ENCODE measurements at regions of chr16 and their contacts with region 1.

Region 1: GRCh38 chr16:81808933-81809496 is 29.9 kb downstream of the PLCG2 start:
- DNase-seq: peak; percentile 2
- ATAC-seq: peak; percentile 35; the same call in 1 of the 2 replicates
- H3K4me3 ChIP-seq: no peak overlapping the region
- H3K27ac ChIP-seq: no peak overlapping the region
- H3K4me1 ChIP-seq: no peaks in the 10 kb centered on the region
- H3K27me3 ChIP-seq: no peaks in the 10 kb centered on the region
- CTCF ChIP-seq: no peak

Region 2: DNA sequence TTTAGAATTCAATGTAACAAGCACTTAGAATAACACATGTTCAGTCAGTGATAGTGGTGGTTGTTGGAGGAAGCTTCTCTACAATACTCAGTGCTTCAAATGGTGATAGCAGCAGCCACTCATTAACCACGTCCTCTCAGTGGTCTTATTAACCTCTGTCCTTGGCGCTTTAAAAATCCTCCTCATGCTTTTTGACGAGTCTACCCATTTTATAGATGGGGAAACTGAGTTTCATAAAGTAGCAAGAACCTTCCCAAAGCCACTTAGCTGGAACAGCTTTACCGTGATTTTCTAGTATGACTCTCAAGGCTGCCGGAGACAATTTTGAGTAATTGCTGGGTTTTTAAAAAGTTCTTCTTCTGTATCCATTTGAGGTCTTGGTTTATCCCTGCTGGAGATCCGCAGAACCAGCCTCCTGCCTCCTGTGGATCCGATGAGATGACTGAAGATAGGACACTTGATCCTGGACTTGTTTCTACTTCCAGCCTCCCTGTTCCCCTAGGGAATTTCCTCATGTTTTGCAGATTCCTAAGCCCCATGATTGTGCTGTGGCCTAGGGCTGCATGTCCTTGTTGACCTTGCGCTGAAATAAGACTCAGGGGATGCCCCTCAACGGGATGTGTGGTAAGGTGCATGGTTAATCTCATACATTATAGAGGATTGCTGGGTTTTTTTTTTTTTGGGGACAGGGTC is 17.7 kb after region 1 on chr16:
- CTCF ChIA-PET with region 1: no interaction called
- POLR2A ChIA-PET with region 1: interaction called, 10 read pairs
- intact Hi-C with region 1: no loop called
- DNase-seq: no peak
- ATAC-seq: no peak
- H3K4me3 ChIP-seq: no peak overlapping the region
- H3K27ac ChIP-seq: no peak overlapping the region
- H3K4me1 ChIP-seq: no peaks in the 10 kb centered on the region
- H3K27me3 ChIP-seq: no peaks in the 10 kb centered on the region
- CTCF ChIP-seq: no peak